ENCODE measurements at regions of chr9 and their contacts with region 1.

Region 1: GRCh38 chr9:129202613-129203555 is 24.8 kb upstream of the IER5L start:
- DNase-seq: peak; percentile 75 to 97 (median 93)

Region 2: DNA sequence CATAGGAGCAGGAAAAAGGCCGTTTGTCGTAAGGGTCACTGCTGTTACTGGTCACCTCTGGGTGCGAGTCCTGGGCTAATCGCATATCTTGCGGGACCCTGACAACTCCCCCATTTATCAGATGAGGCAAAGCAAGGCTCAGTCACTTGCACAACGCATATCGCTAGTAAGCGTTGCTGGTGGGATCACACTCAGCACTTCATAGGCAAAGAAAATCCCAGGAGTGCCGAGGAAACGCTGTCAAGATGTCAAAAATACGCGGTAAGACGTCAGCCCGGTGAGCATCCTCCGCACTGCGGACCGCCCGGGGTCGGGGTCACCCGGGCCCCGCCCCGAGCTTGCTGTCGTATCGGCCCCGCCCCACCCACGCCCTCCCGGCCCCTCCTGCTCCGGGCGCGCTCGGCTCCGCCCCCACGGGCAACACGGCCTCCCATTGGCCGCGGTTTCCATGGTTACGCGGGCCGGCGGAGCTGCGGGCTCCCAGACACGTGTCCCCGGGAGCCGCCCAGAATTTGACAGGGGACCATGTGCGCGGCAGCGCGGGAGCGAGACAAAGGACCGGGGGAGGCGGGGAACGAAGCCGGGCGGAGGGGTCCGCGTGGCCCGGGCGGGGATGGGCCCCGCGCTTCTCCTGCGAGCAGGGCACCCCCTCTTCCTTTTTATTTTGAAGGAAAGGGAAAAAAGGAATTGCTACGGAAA is 55.4 kb after region 1 on chr9:
- intact Hi-C with region 1: loop called (anchors 10 kb)
- DNase-seq: peak; percentile 85 to 98 (median 96)